SK-N-SH (cell line): ENCODE measurements at regions of chr2 and their contacts with region 1.

Region 1: DNA sequence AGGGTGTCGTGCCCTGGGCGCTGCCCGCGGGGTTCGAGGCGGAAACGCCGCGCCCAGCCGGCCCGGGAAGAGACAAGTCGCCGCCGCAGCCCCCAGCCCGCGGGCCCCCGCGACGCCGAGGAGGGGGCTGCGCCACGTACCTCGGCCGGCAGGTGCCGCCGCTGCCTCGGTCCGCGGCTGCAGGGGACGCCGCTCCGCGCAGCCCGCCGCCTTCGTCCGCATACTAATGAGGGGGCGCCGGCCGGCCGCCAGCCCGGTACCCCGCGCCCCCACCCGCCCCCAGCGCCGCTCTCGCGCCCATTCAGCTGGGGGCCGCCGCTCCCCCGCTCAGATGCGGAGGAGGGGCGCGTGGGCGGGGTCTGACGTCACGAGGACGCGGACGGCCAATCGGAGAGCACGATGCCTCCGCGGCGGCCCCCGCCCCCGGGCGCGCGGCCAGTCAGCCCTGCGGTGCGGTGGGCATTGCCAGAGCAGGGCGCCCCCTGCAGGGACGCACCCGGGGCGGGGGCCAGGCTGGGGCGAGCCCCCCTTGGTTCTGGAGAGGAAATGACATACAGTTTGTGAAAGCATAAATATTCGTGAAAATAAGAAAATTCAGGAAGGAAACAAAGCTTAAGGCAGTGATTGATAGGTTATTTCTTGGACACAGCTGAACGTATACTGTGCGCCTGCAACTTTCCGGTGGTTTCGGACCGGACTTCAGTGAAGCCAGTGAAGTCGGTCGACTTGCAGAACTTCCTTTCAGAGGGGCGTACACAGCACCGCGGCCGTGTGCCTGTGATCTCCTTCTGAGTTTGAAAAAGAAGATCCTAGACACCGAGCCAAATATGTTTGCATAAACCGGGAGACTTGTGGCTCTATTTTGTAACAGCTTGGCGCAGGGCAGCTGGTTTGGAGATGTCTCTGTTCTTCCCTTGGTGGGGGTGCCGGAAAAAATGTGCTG is at the start of gene ST3GAL5:
- DNase-seq: peak; percentile 97
- H3K4me3 ChIP-seq: peak within 1 kb of the TSS; percentile 71 to 73
- H3K27ac ChIP-seq: peak within 1 kb of the TSS; percentile 70 to 72
- H3K4me1 ChIP-seq: peaks cover 18 to 30% of the 10 kb centered on the region in 2 experiments
- H3K27me3 ChIP-seq: no peaks in the 10 kb centered on the region
- CTCF ChIP-seq: peak; percentile 96
- EP300 ChIP-seq: no peak
- RAD21 ChIP-seq: peak; percentile 54
- polyA plus RNA-seq, gene ST3GAL5: 37.6 and 55.7 TPM in 2 replicates

Region 2: DNA sequence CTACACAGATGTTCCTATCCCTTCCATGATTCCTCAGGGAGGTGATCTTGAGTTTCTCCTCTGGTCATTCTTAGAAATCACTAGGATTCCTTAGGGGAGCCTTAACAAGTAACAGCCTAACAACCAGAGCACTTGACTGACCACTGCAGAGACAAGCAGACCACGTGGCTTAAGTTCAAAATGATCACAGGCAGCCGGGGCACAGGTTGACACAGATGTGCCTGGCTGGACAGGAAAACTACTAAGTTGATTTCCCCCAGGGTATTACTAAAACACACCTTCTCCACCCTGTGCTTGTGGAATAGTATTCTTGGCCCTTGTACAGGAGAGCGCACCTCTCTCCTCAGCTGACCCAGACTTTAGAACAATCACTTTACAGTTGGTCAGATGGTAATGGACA is 30.1 kb before region 1 on chr2:
- CTCF ChIA-PET with region 1: interaction called, 13 read pairs
- POLR2A ChIA-PET with region 1: no interaction called
- DNase-seq: no peak
- H3K4me3 ChIP-seq: no peak overlapping the region
- H3K27ac ChIP-seq: no peak overlapping the region
- H3K4me1 ChIP-seq: peaks cover 0 to 3% of the 10 kb centered on the region in 2 experiments; a peak in 1 of 4 replicates
- H3K27me3 ChIP-seq: no peaks in the 10 kb centered on the region
- CTCF ChIP-seq: no peak
- EP300 ChIP-seq: no peak
- RAD21 ChIP-seq: no peak

Region 3: GRCh38 chr2:85878719-85879385 is 10.1 kb before region 1 on chr2:
- CTCF ChIA-PET with region 1: interaction called, 25 read pairs
- POLR2A ChIA-PET with region 1: no interaction called
- DNase-seq: no peak
- H3K4me3 ChIP-seq: no peak overlapping the region
- H3K27ac ChIP-seq: no peak overlapping the region
- H3K4me1 ChIP-seq: 0 out of 4 replicates have a peak, but pooled peaks cover 0 to 3% of the 10 kb centered on the region in 2 experiments
- H3K27me3 ChIP-seq: no peaks in the 10 kb centered on the region
- CTCF ChIP-seq: no peak
- EP300 ChIP-seq: no peak
- RAD21 ChIP-seq: no peak

Region 4: DNA sequence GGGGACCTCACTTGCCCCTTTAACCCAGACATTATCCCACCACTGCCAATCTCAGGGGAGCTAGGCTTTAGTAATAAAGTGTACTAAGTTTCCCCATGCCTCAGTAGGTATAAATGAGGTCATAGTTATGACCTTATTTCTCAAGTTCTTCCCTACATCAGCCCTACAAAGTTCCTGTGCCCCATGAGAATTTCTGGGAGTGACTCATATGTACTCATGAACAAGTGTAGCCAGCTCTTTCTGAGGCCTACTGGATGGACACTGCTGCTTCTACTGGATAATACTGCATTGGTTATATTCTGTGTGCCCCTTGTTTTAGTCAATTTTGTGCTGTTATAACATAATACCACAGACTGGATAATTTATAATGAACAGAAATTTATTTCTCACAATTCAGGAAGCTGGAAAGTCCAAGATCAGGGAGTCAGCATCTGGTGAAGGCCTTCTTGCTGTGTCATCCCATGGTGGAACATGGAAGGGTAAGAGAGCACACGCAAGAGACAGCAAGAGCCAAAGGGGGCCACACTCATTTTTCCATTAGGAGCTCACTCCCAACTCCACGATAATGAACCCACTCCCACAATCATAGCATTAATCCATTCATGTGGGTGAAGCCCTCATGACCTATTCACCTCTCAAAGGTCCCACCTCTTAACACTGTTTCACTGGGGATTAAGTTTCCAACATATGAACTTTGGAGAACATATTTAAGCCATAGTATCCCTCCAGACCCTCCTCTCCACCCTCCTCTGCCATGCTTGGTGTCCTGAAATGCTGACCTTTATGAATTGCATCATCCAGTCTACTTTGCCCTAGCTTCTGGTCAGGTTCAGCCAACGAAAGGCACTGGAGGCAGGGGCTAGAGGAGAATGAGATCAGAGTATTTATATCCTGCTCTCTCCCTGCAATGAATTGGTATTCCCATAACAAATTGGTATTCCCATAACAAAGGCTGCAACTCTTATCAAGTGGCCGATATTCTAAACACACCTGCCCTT is 25.2 kb after region 1 on chr2:
- CTCF ChIA-PET with region 1: interaction called, 16 read pairs
- POLR2A ChIA-PET with region 1: no interaction called
- DNase-seq: no peak
- H3K4me3 ChIP-seq: no peak overlapping the region
- H3K27ac ChIP-seq: no peak overlapping the region
- H3K4me1 ChIP-seq: peaks cover 0 to 9% of the 10 kb centered on the region in 2 experiments; a peak in 1 of 4 replicates
- H3K27me3 ChIP-seq: no peaks in the 10 kb centered on the region
- CTCF ChIP-seq: no peak
- EP300 ChIP-seq: no peak
- RAD21 ChIP-seq: no peak

Region 5: GRCh38 chr2:85951351-85952067 is 62.6 kb after region 1 on chr2:
- CTCF ChIA-PET with region 1: interaction called, 10 read pairs
- POLR2A ChIA-PET with region 1: no interaction called
- DNase-seq: no peak
- H3K4me3 ChIP-seq: no peak overlapping the region
- H3K27ac ChIP-seq: no peak overlapping the region
- H3K4me1 ChIP-seq: peaks cover 0 to 3% of the 10 kb centered on the region in 2 experiments; a peak in 1 of 4 replicates
- H3K27me3 ChIP-seq: no peaks in the 10 kb centered on the region
- CTCF ChIP-seq: no peak
- EP300 ChIP-seq: no peak
- RAD21 ChIP-seq: no peak

Region 6: DNA sequence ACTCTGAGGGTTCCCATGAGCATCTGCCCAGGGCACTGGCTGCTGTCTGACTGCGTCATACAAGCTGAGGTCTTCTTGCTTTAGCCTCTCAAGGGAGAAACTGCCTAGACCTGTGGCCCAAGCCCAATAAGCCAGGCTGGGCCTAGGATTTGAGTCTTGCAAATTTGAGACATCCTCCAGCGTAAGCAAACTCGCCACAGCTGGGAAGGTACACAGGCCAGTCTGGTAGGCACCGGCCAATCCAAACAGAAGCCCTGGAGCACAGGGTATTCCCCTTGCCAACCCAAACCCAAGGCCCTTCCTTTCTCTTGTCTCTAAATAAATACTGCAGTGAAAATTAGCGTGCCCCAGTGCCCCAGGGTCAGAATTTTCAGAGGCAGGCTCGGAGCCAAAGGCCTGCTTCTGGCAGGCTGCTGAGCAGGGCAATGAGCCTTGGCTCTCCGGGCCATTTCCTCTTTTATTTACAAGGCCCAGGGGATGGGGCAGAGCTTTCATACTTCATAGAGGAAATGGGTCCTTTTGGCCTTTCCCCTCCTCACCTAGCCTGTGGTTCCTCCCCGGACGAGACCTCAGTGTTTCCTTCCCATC is 183.4 kb after region 1 on chr2:
- CTCF ChIA-PET with region 1: interaction called, 17 read pairs
- POLR2A ChIA-PET with region 1: no interaction called
- DNase-seq: peak; percentile 41
- H3K4me3 ChIP-seq: no peak overlapping the region
- H3K27ac ChIP-seq: peak overlapping the region in 1 of 2 experiments; percentile 34; a peak in 1 of 4 replicates
- H3K4me1 ChIP-seq: peaks cover 0 to 17% of the 10 kb centered on the region in 2 experiments; a peak in 2 of 4 replicates
- H3K27me3 ChIP-seq: no peaks in the 10 kb centered on the region
- CTCF ChIP-seq: no peak
- EP300 ChIP-seq: no peak
- RAD21 ChIP-seq: no peak

Region 7: GRCh38 chr2:86176597-86176996 is 287.6 kb after region 1 on chr2:
- CTCF ChIA-PET with region 1: no interaction called
- POLR2A ChIA-PET with region 1: no interaction called
- DNase-seq: no peak
- H3K4me3 ChIP-seq: no peak overlapping the region
- H3K27ac ChIP-seq: peak overlapping the region in 1 of 2 experiments; percentile 22; a peak in 1 of 4 replicates
- H3K4me1 ChIP-seq: peaks cover 2 to 16% of the 10 kb centered on the region in 2 experiments; a peak in 2 of 4 replicates
- H3K27me3 ChIP-seq: no peaks in the 10 kb centered on the region
- CTCF ChIP-seq: no peak
- EP300 ChIP-seq: no peak
- RAD21 ChIP-seq: no peak